Mammary epithelial cell (primary cell): ENCODE measurements at regions of chr9 and their contacts with region 1.

Region 1: GRCh38 chr9:2469681-2470221 is 151.8 kb upstream of the VLDLR start:
- DNase-seq: peak; percentile 40
- H3K4me3 ChIP-seq: no peak overlapping the region
- H3K27ac ChIP-seq: no peak overlapping the region
- H3K4me1 ChIP-seq: no peaks in the 10 kb centered on the region
- H3K27me3 ChIP-seq: peaks cover 4% of the 10 kb centered on the region
- CTCF ChIP-seq: peak in 1 of 2 donors; percentile 38

Region 2: GRCh38 chr9:2662496-2662895 is 192.7 kb after region 1 on chr9:
- CTCF ChIA-PET with region 1: no interaction called
- dilution Hi-C with region 1: no loop called
- in situ Hi-C with region 1: no loop called
- intact Hi-C with region 1: loop called (anchors 10 kb)
- DNase-seq: no peak
- H3K4me3 ChIP-seq: no peak overlapping the region
- H3K27ac ChIP-seq: no peak overlapping the region
- H3K4me1 ChIP-seq: no peaks in the 10 kb centered on the region
- H3K27me3 ChIP-seq: no peaks in the 10 kb centered on the region
- CTCF ChIP-seq: peak; percentile 2 to 25

Region 3: GRCh38 chr9:2809691-2810433 is 340.1 kb after region 1 on chr9:
- CTCF ChIA-PET with region 1: no interaction called
- dilution Hi-C with region 1: no loop called
- in situ Hi-C with region 1: no loop called
- intact Hi-C with region 1: loop called (anchors 10 kb)
- DNase-seq: no peak
- H3K4me3 ChIP-seq: no peak overlapping the region
- H3K27ac ChIP-seq: no peak overlapping the region
- H3K4me1 ChIP-seq: no peaks in the 10 kb centered on the region
- H3K27me3 ChIP-seq: no peaks in the 10 kb centered on the region
- CTCF ChIP-seq: no peak